ENCODE measurements at regions of chr15 and their contacts with region 1.

Region 1: DNA sequence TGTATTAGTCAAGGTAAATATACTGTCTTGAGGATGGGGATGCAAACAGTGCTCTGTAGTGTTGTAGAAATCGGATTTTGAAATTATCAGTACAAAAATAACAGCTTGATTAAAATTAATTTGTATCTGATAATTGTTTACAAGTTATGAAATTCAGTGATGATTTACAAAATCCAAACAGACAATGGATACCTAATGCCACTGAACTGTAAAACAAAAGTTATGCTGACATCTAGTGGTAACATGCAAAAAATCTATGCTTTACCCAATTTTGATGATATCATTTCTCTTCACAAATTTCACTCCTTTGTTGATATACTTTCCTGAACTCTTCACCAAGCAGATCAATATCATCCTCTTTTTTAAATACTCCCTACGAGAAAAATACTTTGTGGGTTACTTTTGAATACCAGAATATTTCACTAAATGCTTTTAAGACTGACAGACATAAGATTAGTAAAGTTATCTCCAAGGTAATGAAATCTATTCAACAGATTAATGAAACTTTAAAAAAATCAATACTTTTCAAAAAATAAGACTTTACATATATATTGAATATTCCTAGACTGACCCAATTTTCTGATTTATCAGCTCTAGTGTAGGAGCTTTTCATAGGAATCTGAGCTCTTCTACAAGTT is 36.0 kb downstream of the MNS1 start:
- DNase-seq: no peak
- ATAC-seq: no peak
- H3K4me3 ChIP-seq: no peak overlapping the region
- H3K4me1 ChIP-seq: no peaks in the 10 kb centered on the region
- CTCF ChIP-seq: no peak

Region 2: GRCh38 chr15:56245871-56246814 is 182.8 kb before region 1 on chr15:
- intact Hi-C with region 1: loop called in 1 of 2 experiments (anchors 10 kb)
- DNase-seq: peak; percentile 90 to 97 (median 93)
- ATAC-seq: peak; percentile 86
- H3K4me3 ChIP-seq: no peak overlapping the region
- H3K4me1 ChIP-seq: peaks cover 10% of the 10 kb centered on the region
- CTCF ChIP-seq: peak; percentile 98

Measured in mucosa of descending colon (tissue), 3 donors.